Naive thymus-derived CD4-positive, alpha-beta T cell (primary cell): ENCODE measurements at regions of chr1 and their contacts with region 1.

Region 1: DNA sequence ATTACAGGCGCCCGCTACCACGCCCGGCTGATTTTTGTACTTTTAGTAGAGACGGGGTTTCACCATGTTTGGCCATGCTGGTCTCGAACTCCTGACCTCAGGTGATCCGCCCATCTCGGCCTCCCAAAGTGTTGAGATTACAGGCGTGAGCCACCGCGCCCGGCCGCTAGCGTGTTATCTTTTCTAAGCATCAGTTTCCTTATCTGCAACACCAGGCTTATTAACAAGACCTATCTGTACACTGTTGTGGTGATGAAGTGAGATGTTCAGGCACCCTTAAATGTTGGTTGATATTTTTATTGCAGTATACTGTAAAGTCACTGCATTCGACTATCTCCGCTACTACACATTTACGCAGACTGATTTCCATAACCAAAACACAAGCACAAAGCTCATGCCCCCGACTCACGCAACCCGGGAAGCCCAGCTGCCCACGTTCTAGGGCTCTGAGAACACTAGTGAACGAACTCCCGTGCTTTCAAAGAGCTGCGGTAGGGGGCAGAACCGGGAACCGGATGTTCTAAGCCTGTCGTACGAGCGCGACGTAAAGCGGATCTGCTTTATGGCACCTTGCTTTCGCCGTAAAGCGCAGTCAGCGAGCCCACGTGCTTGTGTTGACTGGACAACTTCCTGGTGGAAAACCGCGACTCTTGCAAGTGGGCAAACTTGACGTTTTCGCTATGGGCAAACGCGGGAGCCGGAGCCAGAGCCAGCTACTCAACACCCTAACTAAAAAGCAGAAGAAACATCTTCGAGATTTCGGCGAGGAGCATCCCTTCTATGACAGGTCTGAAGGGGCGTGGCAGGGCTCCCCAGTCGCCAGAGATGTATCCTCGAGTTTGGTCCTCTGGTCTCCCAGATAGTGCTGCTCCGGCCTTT is at the start of gene UTP25:
- DNase-seq: peak; percentile 68 to 94 (median 91)
- ATAC-seq: peak; percentile 97
- H3K4me3 ChIP-seq: peak within 1 kb of the TSS; percentile 98
- H3K4me3 Mint-ChIP-seq: peak within 1 kb of the TSS; percentile 77 to 97 (median 92)
- H3K27ac ChIP-seq: peak within 1 kb of the TSS; percentile 84
- H3K27ac Mint-ChIP-seq: peak within 1 kb of the TSS; percentile 74 to 96 (median 89)
- H3K4me1 ChIP-seq: peaks cover 8 to 16% of the 10 kb centered on the region in 2 donors
- H3K4me1 Mint-ChIP-seq: peaks cover 24 to 58% (median 49%) of the 10 kb centered on the region in 7 donors
- H3K27me3 ChIP-seq: no peaks in the 10 kb centered on the region
- H3K27me3 Mint-ChIP-seq: peaks cover 0 to 12% (median 5%) of the 10 kb centered on the region in 5 donors
- total RNA-seq, gene UTP25: 6.0 to 16.3 (median 12.7) TPM

Region 2: GRCh38 chr1:209565759-209566678 is 261.6 kb before region 1 on chr1:
- CTCF ChIA-PET with region 1: no interaction called
- POLR2A ChIA-PET with region 1: no interaction called
- intact Hi-C with region 1: loop called in 1 of 2 experiments (anchors 5 kb)
- DNase-seq: peak; percentile 31 to 73 (median 67)
- ATAC-seq: peak; percentile 84
- H3K4me3 ChIP-seq: no peak overlapping the region
- H3K4me3 Mint-ChIP-seq: peak overlapping the region in 1 of 10 donors; percentile 29
- H3K27ac ChIP-seq: no peak overlapping the region
- H3K27ac Mint-ChIP-seq: peak overlapping the region in 1 of 9 donors; percentile 15
- H3K4me1 ChIP-seq: peaks cover 0 to 11% of the 10 kb centered on the region in 2 donors
- H3K4me1 Mint-ChIP-seq: peaks cover 6 to 26% (median 11%) of the 10 kb centered on the region in 7 donors
- H3K27me3 ChIP-seq: no peaks in the 10 kb centered on the region
- H3K27me3 Mint-ChIP-seq: peaks cover 17 to 47% (median 38%) of the 10 kb centered on the region in 5 donors

Region 3: DNA sequence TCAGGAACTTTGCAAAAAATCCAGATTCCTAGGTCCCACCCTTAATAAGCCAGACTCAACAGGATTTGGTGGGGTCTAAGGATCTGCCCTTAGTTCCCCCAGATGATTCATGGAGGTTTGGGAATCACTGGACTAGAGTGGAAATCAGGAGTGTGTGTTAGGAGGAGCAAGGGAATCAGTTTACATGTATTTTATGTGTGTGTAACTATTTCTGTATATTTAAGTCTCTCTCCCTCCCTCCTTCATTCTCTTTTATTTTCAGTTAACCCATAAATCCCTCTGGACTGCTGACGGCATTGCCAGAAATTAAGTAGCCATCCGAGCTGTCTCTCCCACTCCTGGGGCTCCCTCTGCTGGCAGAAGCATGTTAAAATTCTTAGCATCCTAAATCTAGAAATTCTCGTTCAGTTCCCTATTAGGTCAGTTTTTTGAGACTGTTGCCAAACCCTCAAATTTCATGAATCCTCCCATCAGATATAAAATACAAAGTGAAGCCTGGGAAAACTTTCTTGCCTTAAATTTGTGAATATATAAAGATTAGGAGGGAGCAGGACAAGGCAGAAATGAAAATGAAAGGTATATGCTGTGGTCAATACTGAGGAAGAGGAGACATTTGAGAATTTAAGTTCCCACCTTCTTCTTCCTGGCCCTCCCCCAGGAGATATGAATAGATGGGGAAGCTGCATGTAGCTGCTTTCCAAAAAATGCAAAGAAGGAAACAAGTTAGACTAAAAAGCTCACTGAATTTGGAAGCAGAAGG is 134.7 kb before region 1 on chr1:
- CTCF ChIA-PET with region 1: interaction called, 3 read pairs
- POLR2A ChIA-PET with region 1: no interaction called
- intact Hi-C with region 1: loop called (anchors 2 to 5 kb)
- DNase-seq: peak; percentile 36 to 66 (median 57)
- ATAC-seq: peak; percentile 75
- H3K4me3 ChIP-seq: no peak overlapping the region
- H3K4me3 Mint-ChIP-seq: no peak overlapping the region
- H3K27ac ChIP-seq: no peak overlapping the region
- H3K27ac Mint-ChIP-seq: peak overlapping the region in 5 of 9 donors; percentile 14 to 74 (median 37)
- H3K4me1 ChIP-seq: peaks cover 0 to 19% of the 10 kb centered on the region in 2 donors
- H3K4me1 Mint-ChIP-seq: peaks cover 16 to 48% (median 30%) of the 10 kb centered on the region in 7 donors
- H3K27me3 ChIP-seq: no peaks in the 10 kb centered on the region
- H3K27me3 Mint-ChIP-seq: no peaks in the 10 kb centered on the region

Region 4: DNA sequence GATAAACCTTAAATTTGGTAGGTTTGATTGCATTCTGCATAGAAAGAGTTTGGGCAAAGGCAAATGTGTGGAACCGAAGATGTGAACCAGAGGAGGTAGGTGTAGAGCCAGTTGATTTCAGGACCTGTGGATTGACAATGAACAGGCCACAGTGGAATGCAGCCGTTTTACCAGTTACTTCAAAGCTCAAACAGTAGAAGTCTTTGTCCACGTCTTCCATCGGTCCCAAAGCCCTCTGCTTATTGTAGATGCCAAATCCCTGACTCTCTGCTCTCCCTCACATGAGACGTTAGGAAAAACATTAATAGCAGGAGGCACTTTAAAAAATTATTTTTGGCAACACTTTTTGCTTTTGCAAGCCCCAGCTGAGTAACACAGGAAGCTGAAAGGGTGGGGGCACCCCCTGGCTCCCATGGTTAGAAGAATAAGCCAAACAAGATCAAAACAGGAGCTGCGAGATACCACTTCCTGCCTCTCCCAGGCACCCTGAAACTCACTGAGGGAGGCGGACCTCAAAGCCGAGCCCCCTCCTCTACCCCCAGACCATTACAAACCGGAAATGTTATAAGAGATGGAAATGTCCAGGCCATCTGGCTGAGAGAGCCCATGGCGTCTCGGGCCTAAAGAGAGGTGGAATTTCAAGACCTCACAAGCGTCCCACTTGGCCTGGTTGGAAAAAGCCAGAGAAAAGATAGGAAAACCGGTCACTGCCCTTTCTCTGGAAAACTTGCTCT is 58.3 kb before region 1 on chr1:
- CTCF ChIA-PET with region 1: interaction called, 5 read pairs
- POLR2A ChIA-PET with region 1: interaction called, 62 read pairs
- intact Hi-C with region 1: loop called (anchors 1 kb)
- DNase-seq: peak in 8 of 9 donors; percentile 73 to 85 (median 83)
- ATAC-seq: peak; percentile 80
- H3K4me3 ChIP-seq: peak overlapping the region; percentile 88
- H3K4me3 Mint-ChIP-seq: no peak overlapping the region
- H3K27ac ChIP-seq: peak overlapping the region; percentile 83
- H3K27ac Mint-ChIP-seq: no peak overlapping the region
- H3K4me1 ChIP-seq: peaks cover 44 to 58% of the 10 kb centered on the region in 2 donors
- H3K4me1 Mint-ChIP-seq: peaks cover 31 to 40% (median 35%) of the 10 kb centered on the region in 7 donors
- H3K27me3 ChIP-seq: no peaks in the 10 kb centered on the region
- H3K27me3 Mint-ChIP-seq: no peaks in the 10 kb centered on the region

Region 5: DNA sequence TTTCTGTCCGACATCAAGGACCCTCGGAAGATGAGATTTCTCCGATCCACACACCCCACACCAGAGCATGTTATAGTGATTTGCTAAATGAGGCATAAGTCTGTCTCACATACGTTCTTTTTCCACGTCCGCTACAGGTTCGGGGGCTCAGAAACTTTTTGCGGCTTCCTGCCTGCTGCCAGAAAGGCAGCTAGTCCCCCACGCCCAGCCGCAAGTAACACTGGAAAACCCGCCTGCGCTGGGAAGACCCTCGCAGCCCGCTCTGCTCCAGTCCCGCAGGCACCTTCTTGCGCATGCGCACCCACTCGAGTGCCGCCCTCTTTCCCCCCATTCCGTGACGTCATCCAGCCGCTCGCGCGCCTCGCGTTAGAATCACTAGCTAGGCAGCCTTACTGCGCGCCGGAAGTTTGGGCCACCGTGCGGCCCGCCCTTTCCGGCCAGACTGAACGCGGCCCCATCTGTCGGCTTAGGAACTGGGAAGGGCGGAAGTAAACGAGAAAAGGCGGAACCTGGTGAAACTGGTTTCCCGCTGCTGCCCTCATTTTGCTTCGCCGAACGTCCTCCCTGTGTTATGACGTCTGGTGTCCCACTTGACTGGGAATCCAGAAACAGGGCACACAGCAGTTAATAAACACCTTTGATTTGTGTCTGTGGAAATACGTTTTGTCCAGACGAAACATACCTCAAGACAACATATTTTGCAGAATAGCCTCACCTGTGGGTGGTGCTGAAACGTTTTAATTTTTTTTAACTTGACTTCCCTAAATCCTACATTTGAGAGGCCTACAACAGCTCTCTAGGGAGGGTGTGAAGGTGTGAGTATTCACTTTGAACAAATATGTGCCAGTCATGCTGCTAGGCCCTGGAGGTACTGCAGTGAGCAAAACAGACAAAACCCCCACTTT is 43.1 kb before region 1 on chr1 and contains the start of gene C1orf74:
- CTCF ChIA-PET with region 1: interaction called, 14 read pairs
- POLR2A ChIA-PET with region 1: interaction called, 18 read pairs
- intact Hi-C with region 1: loop called (anchors 1 kb)
- DNase-seq: peak; percentile 97 to 100 (median 99)
- ATAC-seq: peak; percentile 99
- H3K4me3 ChIP-seq: peak within 1 kb of the TSS; percentile 65
- H3K4me3 Mint-ChIP-seq: peak within 1 kb of the TSS; percentile 86 to 97 (median 92)
- H3K27ac ChIP-seq: peak within 1 kb of the TSS; percentile 90
- H3K27ac Mint-ChIP-seq: peak within 1 kb of the TSS; percentile 92 to 99 (median 97)
- H3K4me1 ChIP-seq: peaks cover 11 to 19% of the 10 kb centered on the region in 2 donors
- H3K4me1 Mint-ChIP-seq: peaks cover 9 to 63% (median 37%) of the 10 kb centered on the region in 7 donors
- H3K27me3 ChIP-seq: no peaks in the 10 kb centered on the region
- H3K27me3 Mint-ChIP-seq: peaks cover 5 to 9% (median 8%) of the 10 kb centered on the region in 5 donors
- total RNA-seq, gene C1orf74: 0.51 to 1.5 (median 1.3) TPM

Region 6: DNA sequence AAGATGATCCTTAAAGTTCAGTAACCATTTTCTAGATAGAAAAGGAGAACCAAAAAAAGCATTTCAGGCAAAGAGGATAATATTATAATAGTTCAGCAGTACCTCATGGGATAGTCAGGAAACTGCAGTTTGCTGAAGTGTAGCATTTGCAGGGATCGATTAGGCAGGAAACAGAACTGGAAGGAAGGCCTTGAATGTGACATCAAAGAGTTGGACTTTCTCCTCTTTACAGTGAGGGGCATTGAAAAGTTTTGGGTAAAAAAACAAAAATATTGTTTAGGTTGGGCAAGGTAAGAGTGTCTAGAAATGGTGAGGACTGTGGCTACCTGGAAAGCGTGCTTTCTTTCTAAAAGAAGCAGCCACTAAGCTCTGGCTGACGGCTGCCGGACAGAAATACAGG is 13.7 kb before region 1 on chr1:
- CTCF ChIA-PET with region 1: interaction called, 14 read pairs
- POLR2A ChIA-PET with region 1: interaction called, 4 read pairs
- intact Hi-C with region 1: no loop called
- DNase-seq: no peak
- ATAC-seq: no peak
- H3K4me3 ChIP-seq: no peak overlapping the region
- H3K4me3 Mint-ChIP-seq: no peak overlapping the region
- H3K27ac ChIP-seq: no peak overlapping the region
- H3K27ac Mint-ChIP-seq: no peak overlapping the region
- H3K4me1 ChIP-seq: no peaks in the 10 kb centered on the region
- H3K4me1 Mint-ChIP-seq: peaks cover 0 to 10% (median 2%) of the 10 kb centered on the region in 7 donors
- H3K27me3 ChIP-seq: no peaks in the 10 kb centered on the region
- H3K27me3 Mint-ChIP-seq: peaks cover 0 to 5% (median 0%) of the 10 kb centered on the region in 5 donors